ENCODE measurements at regions of chr19 and their contacts with region 1.

Region 1: GRCh38 chr19:35352448-35353304 is 5.0 kb downstream of the FFAR1 start:
- DNase-seq: peak; percentile 59 to 90
- H3K4me3 ChIP-seq: no peak overlapping the region
- CTCF ChIP-seq: peak in 1 of 3 donors; percentile 55
- POLR2A ChIP-seq: no peak

Region 2: DNA sequence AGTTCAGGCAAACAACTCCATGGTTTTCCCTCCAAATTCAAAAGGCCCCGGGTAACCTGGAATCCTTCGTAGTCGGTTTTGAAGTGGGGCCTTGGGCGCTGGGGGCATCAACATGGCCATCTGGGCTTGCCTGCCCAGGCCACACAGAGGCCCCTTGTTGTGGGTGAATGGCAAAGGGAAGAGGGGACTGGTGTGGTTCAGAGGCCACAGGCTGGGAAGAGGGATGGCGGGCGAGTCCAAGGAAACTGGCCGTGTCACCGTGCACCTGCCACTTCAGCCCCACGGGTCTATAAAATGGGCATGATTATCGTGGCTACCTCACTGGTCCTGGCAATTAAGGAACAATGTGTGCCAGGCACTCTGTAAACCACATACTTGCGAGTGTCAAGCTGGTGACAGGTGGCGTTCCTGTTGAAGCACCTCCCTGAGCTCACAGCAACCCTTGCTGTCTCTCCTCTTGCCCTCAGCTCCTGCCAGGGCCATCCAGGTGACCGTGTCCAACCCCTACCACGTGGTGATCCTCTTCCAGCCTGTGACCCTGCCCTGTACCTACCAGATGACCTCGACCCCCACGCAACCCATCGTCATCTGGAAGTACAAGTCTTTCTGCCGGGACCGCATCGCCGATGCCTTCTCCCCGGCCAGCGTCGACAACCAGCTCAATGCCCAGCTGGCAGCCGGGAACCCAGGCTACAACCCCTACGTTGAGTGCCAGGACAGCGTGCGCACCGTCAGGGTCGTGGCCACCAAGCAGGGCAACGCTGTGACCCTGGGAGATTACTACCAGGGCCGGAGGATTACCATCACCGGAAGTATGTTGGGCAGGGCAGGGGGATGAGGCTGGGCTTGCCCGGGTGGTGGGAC is 102.6 kb before region 1 on chr19:
- intact Hi-C with region 1: no loop called
- DNase-seq: peak; percentile 12 to 77
- H3K4me3 ChIP-seq: no peak overlapping the region
- CTCF ChIP-seq: no peak
- POLR2A ChIP-seq: no peak

Region 3: GRCh38 chr19:35468637-35469036 is 116.0 kb after region 1 on chr19:
- intact Hi-C with region 1: loop called (anchors 5 kb)
- DNase-seq: peak in 1 of 2 donors; percentile 51
- H3K4me3 ChIP-seq: no peak overlapping the region
- CTCF ChIP-seq: peak in 1 of 3 donors; percentile 45
- POLR2A ChIP-seq: no peak

Region 4: DNA sequence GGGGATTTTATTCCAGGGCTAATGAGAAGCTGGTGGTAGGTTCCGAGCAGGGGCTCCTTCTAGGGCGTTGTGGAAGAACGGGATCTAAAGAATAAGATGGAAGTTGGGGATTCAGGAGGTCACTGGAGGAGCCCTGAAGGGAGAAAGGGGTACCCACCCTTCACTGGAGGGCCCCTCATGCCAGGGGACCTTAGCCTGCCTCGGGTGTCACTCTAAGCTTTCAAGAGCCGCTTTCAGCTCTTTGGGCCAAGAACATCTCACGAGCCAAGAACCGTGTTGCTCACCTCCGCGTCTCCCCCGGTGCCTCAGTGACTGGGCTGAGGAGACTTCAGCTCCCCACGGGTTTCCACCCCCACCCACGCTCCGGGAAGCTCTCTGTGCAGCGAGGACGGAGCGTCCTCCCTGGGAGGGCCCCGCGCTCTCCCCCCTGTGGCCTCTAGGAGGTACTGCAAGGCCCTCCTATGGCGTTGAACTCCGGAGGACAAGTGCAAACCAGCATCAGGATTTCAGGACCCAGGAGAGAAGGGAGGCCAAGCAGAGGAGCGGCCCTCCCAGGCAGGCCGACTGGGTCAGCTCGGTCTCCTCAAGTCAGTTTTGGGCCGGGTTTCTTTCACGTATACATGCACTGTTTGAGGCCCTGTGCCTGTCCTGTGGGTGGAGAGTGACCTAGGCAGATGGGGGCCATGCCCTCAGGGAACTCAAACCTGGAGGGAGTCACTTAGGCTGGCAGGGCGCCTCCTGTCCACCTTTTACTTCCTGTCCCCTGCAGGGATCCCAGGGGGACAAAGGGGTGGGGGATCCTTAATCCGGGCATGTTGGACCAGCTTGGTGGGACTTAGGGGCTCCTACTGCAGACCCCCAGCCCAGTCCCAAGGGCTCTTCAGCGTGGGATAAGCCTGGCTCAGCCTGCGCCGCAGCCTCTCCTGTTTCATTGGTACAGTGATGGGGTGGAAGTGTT is 142.7 kb after region 1 on chr19:
- intact Hi-C with region 1: loop called (anchors 10 kb)
- DNase-seq: peak in 1 of 2 donors; percentile 92
- H3K4me3 ChIP-seq: no peak overlapping the region
- CTCF ChIP-seq: peak in 1 of 3 donors; percentile 81
- POLR2A ChIP-seq: no peak

Measured in lower leg skin (tissue), 4 donors.